ENCODE measurements at regions of chr5 and their contacts with region 1.

Region 1: DNA sequence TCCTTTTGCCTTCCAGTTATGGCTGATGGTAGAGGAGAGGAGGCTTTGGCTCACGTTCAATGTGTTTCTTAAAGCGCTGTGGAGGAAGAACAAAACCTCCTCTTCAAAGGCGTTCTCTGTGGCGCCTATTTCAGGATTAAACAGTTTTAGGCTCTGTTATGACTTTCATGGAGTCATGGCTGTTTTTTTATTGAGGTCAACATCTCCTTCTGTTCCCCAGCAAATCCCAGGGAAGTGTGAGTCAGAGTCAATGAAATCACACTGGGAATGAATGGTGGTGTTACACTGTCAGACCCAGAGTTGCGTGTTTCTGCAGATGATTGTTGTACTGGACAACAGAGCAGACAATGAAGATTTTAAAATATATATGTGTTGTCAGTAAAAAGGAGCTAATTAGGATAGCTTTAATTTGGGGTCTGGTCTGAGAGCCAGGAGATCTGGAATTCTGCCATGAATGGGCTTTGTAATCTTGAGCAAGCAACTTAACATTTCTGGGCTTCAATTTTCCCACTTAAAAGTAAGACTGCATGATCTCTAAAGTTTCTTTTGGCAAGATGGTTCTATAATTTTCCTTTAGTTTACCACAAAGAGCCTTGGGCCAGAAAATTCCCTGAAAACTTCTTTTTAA is 240.7 kb downstream of the CSNK1G3 start:
- DNase-seq: peak in 1 of 5 donors; percentile 11
- ATAC-seq: peak in 3 of 4 donors; percentile 71 to 93 (median 91)
- H3K4me3 ChIP-seq: no peak overlapping the region
- H3K27ac ChIP-seq: peak overlapping the region in 8 of 12 donors; percentile 11 to 67 (median 38)
- H3K4me1 ChIP-seq: peaks cover 3 to 45% (median 20%) of the 10 kb centered on the region in 12 donors
- H3K27me3 ChIP-seq: no peaks in the 10 kb centered on the region
- CTCF ChIP-seq: no peak
- POLR2A ChIP-seq: no peak

Region 2: DNA sequence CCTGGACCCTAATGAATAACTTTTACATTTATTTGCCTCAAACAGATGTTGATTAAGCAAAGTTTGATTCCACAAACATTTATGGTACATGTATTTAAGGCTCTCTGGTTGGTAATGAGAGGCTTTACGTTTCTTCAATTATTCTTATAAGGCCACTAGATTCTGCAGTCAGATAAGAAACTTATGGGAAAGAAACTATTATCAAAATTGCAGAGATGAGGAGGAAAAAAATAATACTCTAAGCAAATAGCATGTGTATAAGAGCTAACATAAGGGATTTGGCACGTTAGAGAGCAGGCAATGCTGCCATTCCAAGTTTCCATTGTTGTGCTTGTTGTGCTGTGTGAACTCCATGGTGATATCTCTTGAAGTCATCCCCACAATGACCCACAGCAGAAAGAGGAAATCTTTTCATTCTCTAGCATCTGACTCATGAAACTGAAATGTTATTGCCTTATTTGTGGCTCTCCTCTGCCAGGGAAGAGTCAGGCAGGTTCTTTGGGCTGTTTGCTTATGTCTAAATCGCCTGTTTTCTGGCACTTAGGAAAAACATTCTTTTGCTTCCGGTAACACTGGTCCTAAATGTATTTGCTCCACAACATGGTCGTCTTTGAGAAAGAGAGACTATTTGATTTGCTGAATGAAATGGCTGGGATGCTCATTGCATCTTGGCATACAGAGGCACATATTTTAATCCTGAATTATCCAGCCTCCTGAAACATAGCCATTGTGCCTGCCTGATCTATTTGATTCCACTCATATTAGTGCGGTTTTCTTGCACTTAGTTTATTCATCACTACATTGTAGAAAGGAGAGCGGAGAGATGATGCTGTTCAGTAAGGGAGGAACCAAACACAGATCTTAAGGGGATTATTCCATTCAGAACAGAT is 52.0 kb before region 1 on chr5:
- intact Hi-C with region 1: loop called in 2 of 10 experiments (anchors 5 to 10 kb)
- DNase-seq: peak in 3 of 5 donors; percentile 16 to 38 (median 24)
- ATAC-seq: peak; percentile 65 to 87 (median 74)
- H3K4me3 ChIP-seq: no peak overlapping the region
- H3K27ac ChIP-seq: peak overlapping the region in 6 of 12 donors; percentile 4 to 53 (median 44)
- H3K4me1 ChIP-seq: peaks cover 0 to 30% (median 9%) of the 10 kb centered on the region in 12 donors
- H3K27me3 ChIP-seq: no peaks in the 10 kb centered on the region
- CTCF ChIP-seq: no peak
- POLR2A ChIP-seq: no peak

Region 3: GRCh38 chr5:123735384-123735783 is 17.3 kb before region 1 on chr5:
- intact Hi-C with region 1: loop called in 1 of 10 experiments (anchors 2 kb)
- DNase-seq: no peak
- ATAC-seq: no peak
- H3K4me3 ChIP-seq: no peak overlapping the region
- H3K27ac ChIP-seq: no peak overlapping the region
- H3K4me1 ChIP-seq: no peaks in the 10 kb centered on the region
- H3K27me3 ChIP-seq: no peaks in the 10 kb centered on the region
- CTCF ChIP-seq: no peak
- POLR2A ChIP-seq: no peak

Region 4: DNA sequence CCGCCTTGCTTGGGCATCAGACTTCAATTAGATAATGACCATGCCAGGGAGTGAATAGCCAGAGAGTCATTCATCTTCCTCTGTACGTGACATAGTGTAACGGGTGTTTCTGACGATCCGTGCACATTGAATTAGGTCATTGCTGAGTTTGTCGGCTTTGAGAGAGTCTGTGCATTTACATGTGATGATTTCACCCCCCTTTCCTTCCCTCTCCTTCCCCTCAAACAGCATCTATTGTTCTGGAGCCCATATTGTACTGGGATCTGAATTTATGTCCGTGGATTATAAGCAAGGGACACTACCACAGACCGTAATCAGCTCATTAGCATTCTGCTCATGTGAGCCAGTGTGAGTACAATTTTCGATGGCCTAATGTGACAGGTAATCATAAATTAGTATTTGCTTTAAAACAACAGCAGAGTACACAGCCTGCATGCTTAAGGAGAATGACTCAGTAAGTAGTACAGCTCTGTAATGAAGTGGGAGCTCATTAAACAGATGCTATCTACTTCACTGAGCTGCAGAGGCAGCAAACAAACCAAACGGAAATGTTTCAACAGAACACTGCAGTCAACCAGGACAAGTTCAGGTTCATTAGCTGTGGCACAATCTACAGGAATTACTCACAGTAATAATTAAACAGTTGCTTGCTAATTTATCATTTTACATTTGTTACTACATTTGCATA is 61.4 kb after region 1 on chr5:
- intact Hi-C with region 1: loop called in 1 of 10 experiments (anchors 1 kb)
- DNase-seq: no peak
- ATAC-seq: peak; percentile 45 to 65 (median 52)
- H3K4me3 ChIP-seq: peak overlapping the region in 1 of 12 donors; percentile 4
- H3K27ac ChIP-seq: peak overlapping the region in 11 of 12 donors; percentile 11 to 74 (median 33)
- H3K4me1 ChIP-seq: peaks cover 9 to 44% (median 30%) of the 10 kb centered on the region in 12 donors
- H3K27me3 ChIP-seq: no peaks in the 10 kb centered on the region
- CTCF ChIP-seq: no peak
- POLR2A ChIP-seq: no peak

Measured in heart left ventricle (tissue), 16 donors.